Caco-2 (cell line): ENCODE measurements at regions of chr2 and their contacts with region 1.

Region 1: GRCh38 chr2:64094663-64095382 is 49.4 kb downstream of the PELI1 start:
- DNase-seq: no peak
- H3K4me3 ChIP-seq: no peak overlapping the region
- H3K4me3 Mint-ChIP-seq: no peak overlapping the region
- H3K27ac Mint-ChIP-seq: no peak overlapping the region
- H3K4me1 ChIP-seq: peaks cover 34% of the 10 kb centered on the region
- H3K4me1 Mint-ChIP-seq: peaks cover 42% of the 10 kb centered on the region
- H3K27me3 ChIP-seq: no peaks in the 10 kb centered on the region
- H3K27me3 Mint-ChIP-seq: no peaks in the 10 kb centered on the region
- CTCF ChIP-seq: no peak

Region 2: GRCh38 chr2:64045938-64046337 is 48.9 kb before region 1 on chr2:
- CTCF ChIA-PET with region 1: no interaction called
- POLR2A ChIA-PET with region 1: no interaction called
- intact Hi-C with region 1: loop called (anchors 5 kb)
- DNase-seq: no peak
- H3K4me3 ChIP-seq: no peak overlapping the region
- H3K4me3 Mint-ChIP-seq: no peak overlapping the region
- H3K27ac Mint-ChIP-seq: no peak overlapping the region
- H3K4me1 ChIP-seq: peaks cover 7% of the 10 kb centered on the region
- H3K4me1 Mint-ChIP-seq: peaks cover 7% of the 10 kb centered on the region
- H3K27me3 ChIP-seq: no peaks in the 10 kb centered on the region
- H3K27me3 Mint-ChIP-seq: no peaks in the 10 kb centered on the region
- CTCF ChIP-seq: no peak

Region 3: DNA sequence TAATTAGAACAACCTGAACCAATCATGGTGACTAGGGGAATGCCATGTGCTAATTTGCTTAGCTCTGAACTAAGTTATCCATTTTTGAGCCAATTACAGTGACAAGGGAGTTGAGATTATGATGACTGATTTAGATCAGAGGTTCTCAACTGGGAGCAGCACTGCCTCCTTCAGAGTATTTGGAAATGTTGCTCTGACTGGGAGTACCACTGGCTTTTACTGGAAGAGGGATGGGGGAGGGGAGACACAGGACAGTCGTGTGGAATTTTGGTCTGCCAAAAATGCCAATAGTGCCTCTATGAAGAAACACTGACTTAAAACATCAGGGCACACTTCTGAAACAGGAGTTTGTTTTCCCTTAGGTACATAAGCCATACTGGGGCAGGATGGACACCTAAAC is 27.5 kb before region 1 on chr2:
- CTCF ChIA-PET with region 1: no interaction called
- POLR2A ChIA-PET with region 1: no interaction called
- intact Hi-C with region 1: no loop called
- DNase-seq: no peak
- H3K4me3 ChIP-seq: no peak overlapping the region
- H3K4me3 Mint-ChIP-seq: no peak overlapping the region
- H3K27ac Mint-ChIP-seq: no peak overlapping the region
- H3K4me1 ChIP-seq: peaks cover 41% of the 10 kb centered on the region
- H3K4me1 Mint-ChIP-seq: peaks cover 26% of the 10 kb centered on the region
- H3K27me3 ChIP-seq: no peaks in the 10 kb centered on the region
- H3K27me3 Mint-ChIP-seq: no peaks in the 10 kb centered on the region
- CTCF ChIP-seq: no peak